ENCODE measurements at regions of chr11 and their contacts with region 1.

Region 1: GRCh38 chr11:70818351-70818750 is 420.0 kb downstream of the CTTN start:
- DNase-seq: peak in 1 of 5 donors; percentile 20
- ATAC-seq: no peak
- H3K4me3 ChIP-seq: no peak overlapping the region
- H3K27ac ChIP-seq: no peak overlapping the region
- H3K4me1 ChIP-seq: peaks cover 0 to 7% (median 0%) of the 10 kb centered on the region in 12 donors
- H3K27me3 ChIP-seq: peaks cover 0 to 17% (median 0%) of the 10 kb centered on the region in 9 donors
- CTCF ChIP-seq: no peak
- POLR2A ChIP-seq: no peak

Region 2: DNA sequence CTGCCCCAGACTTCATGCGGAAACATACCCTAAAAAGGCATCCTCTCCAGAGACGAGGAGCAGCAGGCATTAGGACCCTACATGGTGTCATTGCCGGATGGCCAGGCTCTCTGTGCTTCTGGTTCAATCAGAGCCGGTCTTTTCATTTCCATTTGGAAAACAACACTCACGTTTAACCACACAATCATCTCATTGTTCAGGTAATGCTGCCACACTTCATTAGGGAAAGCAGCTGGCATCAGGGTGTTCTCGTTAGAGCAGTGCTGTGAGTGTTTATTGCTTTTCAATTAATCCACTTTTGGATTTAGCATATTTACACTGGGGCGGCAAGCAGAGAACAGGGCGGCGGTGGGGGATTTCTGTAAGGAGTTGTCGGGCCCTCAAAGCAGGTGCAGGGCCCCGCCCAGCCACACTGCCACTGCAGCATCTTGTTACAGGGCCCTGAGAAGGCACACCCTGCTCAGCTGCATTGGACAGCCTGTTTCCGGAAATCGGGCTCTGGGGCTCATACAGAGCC is 95.4 kb after region 1 on chr11:
- intact Hi-C with region 1: no loop called
- DNase-seq: no peak
- ATAC-seq: no peak
- H3K4me3 ChIP-seq: no peak overlapping the region
- H3K27ac ChIP-seq: peak overlapping the region in 1 of 12 donors; percentile 82
- H3K4me1 ChIP-seq: no peaks in the 10 kb centered on the region
- H3K27me3 ChIP-seq: peaks cover 0 to 41% (median 6%) of the 10 kb centered on the region in 9 donors
- CTCF ChIP-seq: no peak
- POLR2A ChIP-seq: no peak

Region 3: DNA sequence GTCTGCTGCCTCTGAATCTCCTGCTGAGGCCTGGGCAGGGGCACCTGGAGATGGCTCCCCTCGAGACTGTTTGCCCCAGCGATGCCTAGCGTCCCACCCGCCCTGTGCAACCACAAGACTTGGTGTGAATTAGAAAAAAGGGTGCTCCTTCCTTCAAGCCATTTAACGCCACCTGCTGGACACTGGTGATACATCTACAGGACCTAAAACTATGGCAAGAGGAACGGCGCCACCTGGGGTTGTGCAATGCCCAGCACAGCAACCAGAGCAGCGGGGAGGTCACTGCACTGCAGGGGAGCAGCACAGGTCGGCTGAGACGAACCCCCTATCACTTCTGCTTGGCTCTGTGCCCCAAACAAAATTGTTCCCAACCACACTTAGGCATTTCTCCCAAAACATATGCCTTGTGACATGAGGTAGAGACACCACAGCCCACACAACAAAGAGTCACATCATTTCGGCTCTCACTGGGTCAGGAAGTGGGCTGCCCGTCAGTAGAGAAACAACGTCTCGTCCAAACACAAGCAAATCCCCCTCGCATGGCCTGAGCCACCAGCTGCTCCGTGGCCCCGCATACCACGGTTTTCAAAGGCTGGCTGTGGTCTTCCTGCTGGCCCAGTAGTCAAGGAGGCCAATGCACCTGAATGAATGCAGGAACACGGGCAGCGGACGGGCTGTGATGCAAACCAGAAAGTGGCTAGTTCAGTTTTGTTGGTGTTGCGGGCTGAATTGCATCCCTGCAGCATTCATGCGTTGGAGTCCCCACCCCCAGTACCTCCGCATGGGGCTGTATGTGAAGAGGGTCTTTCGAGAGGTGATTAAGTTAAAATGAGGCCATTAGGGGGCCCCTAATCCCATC is 262.1 kb after region 1 on chr11:
- intact Hi-C with region 1: loop called in 2 of 10 experiments (anchors 5 kb)
- DNase-seq: peak in 3 of 5 donors; percentile 29 to 59 (median 56)
- ATAC-seq: peak in 3 of 4 donors; percentile 26 to 67 (median 60)
- H3K4me3 ChIP-seq: no peak overlapping the region
- H3K27ac ChIP-seq: no peak overlapping the region
- H3K4me1 ChIP-seq: no peaks in the 10 kb centered on the region
- H3K27me3 ChIP-seq: peaks cover 0 to 14% (median 0%) of the 10 kb centered on the region in 9 donors
- CTCF ChIP-seq: peak; percentile 24 to 60 (median 48)
- POLR2A ChIP-seq: no peak

Region 4: GRCh38 chr11:71420455-71421241 is 602.3 kb after region 1 on chr11:
- intact Hi-C with region 1: loop called in 2 of 10 experiments (anchors 10 kb)
- DNase-seq: peak in 1 of 5 donors; percentile 19
- ATAC-seq: peak in 2 of 4 donors; percentile 54 to 64
- H3K4me3 ChIP-seq: no peak overlapping the region
- H3K27ac ChIP-seq: no peak overlapping the region
- H3K4me1 ChIP-seq: no peaks in the 10 kb centered on the region
- H3K27me3 ChIP-seq: peaks cover 0 to 4% (median 0%) of the 10 kb centered on the region in 9 donors
- CTCF ChIP-seq: peak; percentile 30 to 65 (median 48)
- POLR2A ChIP-seq: no peak

Measured in heart left ventricle (tissue), 16 donors.